ENCODE measurements at regions of chr17 and their contacts with region 1.

Region 1: DNA sequence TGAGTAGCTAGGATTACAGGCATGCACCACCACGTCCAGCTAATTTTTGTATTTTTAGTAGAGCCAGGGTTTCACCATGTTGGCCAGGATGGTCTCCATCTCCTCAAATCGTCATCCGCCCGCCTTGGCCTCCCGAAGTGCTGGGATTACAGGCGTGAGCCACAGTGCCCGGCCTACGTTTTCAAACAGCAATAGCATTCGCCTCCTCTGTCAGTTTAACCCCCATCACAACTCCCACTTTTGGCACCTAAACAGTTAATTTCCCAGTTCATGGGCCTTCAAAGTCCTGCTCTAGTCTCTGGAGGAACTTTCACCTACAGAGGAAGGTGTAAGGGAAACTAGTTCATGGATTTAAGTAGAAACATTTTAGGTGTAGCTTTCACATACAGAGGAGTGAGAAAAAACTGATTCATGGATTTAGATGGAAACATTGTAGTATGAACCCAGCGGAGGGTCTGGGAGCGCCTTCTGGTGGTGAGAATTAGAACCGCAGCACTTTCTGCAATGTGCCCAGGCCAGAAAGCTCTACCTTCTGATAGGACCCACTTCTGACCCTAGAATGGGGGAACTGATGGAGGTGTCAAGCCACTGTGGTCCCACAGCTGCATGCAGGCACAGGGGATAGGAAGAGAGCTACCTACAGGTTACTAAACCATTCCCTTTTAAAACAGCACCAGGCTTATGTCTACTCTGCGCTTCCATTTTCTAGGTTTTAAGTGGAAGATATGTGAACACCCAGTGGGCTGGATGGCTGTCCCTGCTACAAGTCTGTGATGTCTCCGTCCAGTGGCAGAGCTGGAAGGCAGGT is 12.0 kb upstream of the MEOX1 start:
- DNase-seq: peak; percentile 77 to 84
- H3K4me3 ChIP-seq: no peak overlapping the region
- H3K4me1 ChIP-seq: peaks cover 15% of the 10 kb centered on the region
- H3K27me3 ChIP-seq: no peaks in the 10 kb centered on the region

Region 2: GRCh38 chr17:43576563-43577229 is 97.0 kb before region 1 on chr17:
- in situ Hi-C with region 1: loop called (anchors 5 kb)
- DNase-seq: peak; percentile 64 to 80
- H3K4me3 ChIP-seq: no peak overlapping the region
- H3K4me1 ChIP-seq: no peaks in the 10 kb centered on the region
- H3K27me3 ChIP-seq: no peaks in the 10 kb centered on the region

Region 3: DNA sequence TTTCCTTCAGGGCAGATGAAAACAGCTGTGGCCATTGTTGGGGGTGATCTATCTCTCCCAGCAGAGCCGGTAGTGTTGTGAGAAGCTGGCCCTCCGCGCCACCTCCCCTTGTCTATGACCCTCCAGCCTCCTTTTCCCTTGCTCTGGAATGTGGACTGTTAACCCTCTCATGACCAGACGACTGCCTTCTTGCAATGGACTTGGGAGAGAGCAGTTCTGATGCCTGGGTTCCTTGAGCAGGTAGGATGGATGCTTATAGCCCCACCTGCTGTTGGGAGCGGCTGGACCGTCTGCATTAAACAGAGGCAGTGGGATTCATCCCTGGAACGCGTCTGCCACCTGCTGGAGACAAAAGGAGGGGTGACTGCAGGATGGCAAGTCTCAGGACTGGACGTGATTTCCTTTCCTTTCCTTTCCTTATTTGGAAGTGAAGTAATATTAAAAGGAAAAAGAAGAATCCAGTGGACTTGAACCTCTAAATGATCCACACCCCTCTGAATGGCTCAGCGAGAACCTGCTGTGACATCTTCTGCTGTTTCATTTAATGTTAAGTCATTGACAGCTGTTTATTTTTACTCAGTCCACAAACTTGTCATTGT is 86.6 kb after region 1 on chr17:
- in situ Hi-C with region 1: loop called (anchors 25 kb)
- DNase-seq: peak; percentile 86 to 97
- H3K4me3 ChIP-seq: no peak overlapping the region
- H3K4me1 ChIP-seq: peaks cover 2% of the 10 kb centered on the region; the same call in 1 of the 2 replicates
- H3K27me3 ChIP-seq: no peaks in the 10 kb centered on the region

Region 4: DNA sequence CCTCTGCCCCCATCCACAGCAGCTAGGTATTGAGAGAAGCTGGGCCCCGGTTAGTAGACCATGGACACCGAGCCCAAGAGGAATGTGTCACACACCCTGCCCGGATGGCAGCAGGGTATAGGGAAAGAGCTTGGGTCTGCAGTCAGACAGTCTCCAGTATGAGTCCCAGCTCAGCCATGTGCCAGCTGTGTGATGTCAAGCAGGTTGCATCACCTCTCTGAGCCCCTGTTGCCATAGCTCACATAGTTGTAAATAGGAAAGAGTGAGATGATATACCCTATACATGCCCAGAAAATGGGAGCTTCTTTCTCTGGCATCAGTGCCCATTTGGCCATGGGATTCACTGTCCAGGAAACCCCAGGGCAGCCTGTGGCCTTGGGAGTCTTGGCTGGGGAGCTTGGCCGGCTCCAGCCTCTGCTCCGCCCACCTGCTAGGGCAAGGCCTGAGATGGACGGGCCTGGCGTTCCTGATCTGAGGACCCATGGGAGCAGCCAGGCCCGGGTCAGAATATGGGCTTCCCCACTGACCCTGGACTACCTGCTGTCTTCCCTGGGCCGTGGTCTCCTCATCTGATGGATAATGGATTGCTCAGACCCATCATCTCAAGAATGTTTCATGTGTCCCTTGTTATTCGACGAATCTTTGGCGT is 186.5 kb after region 1 on chr17:
- in situ Hi-C with region 1: no loop called
- DNase-seq: no peak
- H3K4me3 ChIP-seq: no peak overlapping the region
- H3K4me1 ChIP-seq: no peaks in the 10 kb centered on the region
- H3K27me3 ChIP-seq: 0 out of 2 replicates have a peak, but pooled peaks cover 4% of the 10 kb centered on the region